ENCODE measurements at regions of chr1 and their contacts with region 1.

Region 1: GRCh38 chr1:39268112-39268581 is 63.7 kb downstream of the MACF1 start:
- DNase-seq: no peak
- ATAC-seq: no peak
- H3K4me3 ChIP-seq: no peak overlapping the region
- H3K27ac ChIP-seq: no peak overlapping the region
- H3K4me1 ChIP-seq: no peaks in the 10 kb centered on the region; a peak in 1 of 4 replicates
- H3K27me3 ChIP-seq: no peaks in the 10 kb centered on the region
- CTCF ChIP-seq: no peak
- POLR2A ChIP-seq: no peak
- RAD21 ChIP-seq: no peak

Region 2: DNA sequence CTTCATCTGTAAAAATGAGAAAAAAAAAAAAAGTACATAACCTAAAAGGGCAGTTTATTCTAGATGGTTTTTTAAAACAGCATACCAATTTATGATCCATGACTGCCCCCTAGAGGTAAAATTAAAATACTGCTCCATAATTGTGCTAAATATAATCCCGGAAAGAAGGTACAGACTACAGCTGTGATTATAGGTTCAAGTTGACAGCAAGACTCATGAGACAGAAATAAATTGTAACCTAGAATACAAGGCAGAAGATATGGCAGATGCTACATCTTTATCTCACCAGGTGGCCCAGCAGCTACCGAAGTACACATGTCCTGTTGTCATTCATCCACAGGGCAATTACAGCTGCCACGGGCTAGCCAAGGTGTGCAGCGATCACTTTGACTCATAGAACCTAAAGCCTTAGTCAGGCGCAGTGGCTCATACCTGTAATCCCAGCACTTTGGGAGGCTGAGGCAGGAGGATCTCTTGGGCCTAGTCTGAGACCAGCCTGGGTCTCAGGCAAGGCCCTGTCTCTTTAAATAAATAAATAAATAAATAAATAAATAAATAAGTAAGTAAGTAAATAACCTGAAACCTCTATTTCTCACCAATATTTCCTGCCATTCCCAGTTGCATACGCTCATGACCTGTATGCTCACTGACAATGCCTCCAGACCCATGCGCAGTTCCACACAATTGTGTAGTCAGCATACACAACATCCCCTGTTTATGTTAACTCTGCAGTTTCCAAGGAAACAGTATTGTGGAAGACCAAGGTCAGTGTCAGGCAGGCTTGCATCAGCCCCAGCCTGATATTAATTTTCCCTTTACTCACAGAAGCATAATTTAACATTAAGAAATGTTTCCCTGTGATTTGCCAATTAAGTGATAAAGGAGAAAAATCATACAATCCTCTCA is 452.2 kb after region 1 on chr1:
- CTCF ChIA-PET with region 1: no interaction called
- POLR2A ChIA-PET with region 1: no interaction called
- RAD21 ChIA-PET with region 1: no interaction called
- intact Hi-C with region 1: loop called (anchors 5 kb)
- DNase-seq: peak; percentile 48
- ATAC-seq: peak; percentile 82
- H3K4me3 ChIP-seq: peak overlapping the region in 1 of 2 experiments; percentile 35; a peak in 1 of 4 replicates
- H3K27ac ChIP-seq: no peak overlapping the region
- H3K4me1 ChIP-seq: peaks cover 0 to 3% of the 10 kb centered on the region in 2 experiments; a peak in 1 of 4 replicates
- H3K27me3 ChIP-seq: peaks cover 4% of the 10 kb centered on the region; the same call in 1 of the 2 replicates
- CTCF ChIP-seq: peak; percentile 37 to 80 (median 70); a peak in 5 of 6 replicates
- POLR2A ChIP-seq: no peak
- RAD21 ChIP-seq: peak; percentile 85